Activated B cell treated with CpG ODN at 0.5 μM for 24 hours (primary cell): ENCODE measurements at regions of chr19 and their contacts with region 1.

Region 1: GRCh38 chr19:35213663-35214632 is 14.6 kb downstream of the FAM187B start:
- DNase-seq: peak; percentile 74
- ATAC-seq: peak; percentile 75
- H3K4me3 Mint-ChIP-seq: peak overlapping the region; percentile 65
- H3K27ac Mint-ChIP-seq: peak overlapping the region; percentile 98
- H3K4me1 Mint-ChIP-seq: peaks cover 79% of the 10 kb centered on the region
- H3K27me3 Mint-ChIP-seq: no peaks in the 10 kb centered on the region
- CTCF ChIP-seq: no peak

Region 2: DNA sequence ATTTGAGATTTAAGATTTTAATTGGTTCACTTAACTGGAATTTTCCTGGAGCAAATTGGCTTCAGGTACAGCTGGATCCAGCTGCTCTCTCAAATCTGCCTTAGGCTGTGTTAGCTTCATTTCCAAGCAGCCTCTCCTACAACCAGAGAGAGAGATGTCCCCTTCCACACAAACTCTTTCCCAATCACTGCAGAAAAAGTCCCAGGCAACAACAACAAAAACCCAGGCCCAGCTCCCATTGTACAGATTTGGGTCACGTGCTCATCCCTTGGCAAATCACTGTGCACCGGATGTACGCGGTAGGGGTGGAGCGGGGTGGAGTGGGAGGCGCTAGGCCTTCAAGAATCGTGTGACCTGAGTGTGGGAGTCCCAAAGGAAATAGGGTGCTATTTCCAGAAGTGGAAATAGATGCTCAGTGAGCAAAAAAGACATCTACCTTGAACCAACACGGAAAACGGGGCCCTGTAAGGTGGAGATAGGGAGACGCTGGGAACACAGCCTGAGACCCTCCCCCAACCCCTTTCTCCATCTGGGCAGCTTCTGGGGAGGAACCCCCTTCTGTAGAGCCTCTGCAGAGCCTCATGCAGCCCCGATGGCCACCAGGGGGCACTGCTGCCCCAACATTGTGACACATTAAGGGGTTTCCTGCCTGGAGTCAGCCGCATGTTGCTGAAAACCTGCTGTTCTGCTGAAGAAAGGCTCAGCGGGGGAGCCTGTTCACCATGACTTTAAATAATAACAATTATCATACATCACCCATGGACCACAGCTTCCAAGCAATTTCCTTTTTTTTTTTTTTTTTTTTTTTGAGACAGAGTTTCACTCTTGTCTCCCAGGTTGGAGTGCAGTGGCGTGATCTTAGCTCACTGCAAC is 147.0 kb before region 1 on chr19:
- CTCF ChIA-PET with region 1: interaction called, 4 read pairs
- POLR2A ChIA-PET with region 1: no interaction called
- intact Hi-C with region 1: loop called (anchors 1 kb)
- DNase-seq: peak; percentile 88
- ATAC-seq: peak; percentile 91
- H3K4me3 Mint-ChIP-seq: peak overlapping the region; percentile 24
- H3K27ac Mint-ChIP-seq: peak overlapping the region; percentile 41
- H3K4me1 Mint-ChIP-seq: peaks cover 30% of the 10 kb centered on the region
- H3K27me3 Mint-ChIP-seq: no peaks in the 10 kb centered on the region
- CTCF ChIP-seq: no peak

Region 3: DNA sequence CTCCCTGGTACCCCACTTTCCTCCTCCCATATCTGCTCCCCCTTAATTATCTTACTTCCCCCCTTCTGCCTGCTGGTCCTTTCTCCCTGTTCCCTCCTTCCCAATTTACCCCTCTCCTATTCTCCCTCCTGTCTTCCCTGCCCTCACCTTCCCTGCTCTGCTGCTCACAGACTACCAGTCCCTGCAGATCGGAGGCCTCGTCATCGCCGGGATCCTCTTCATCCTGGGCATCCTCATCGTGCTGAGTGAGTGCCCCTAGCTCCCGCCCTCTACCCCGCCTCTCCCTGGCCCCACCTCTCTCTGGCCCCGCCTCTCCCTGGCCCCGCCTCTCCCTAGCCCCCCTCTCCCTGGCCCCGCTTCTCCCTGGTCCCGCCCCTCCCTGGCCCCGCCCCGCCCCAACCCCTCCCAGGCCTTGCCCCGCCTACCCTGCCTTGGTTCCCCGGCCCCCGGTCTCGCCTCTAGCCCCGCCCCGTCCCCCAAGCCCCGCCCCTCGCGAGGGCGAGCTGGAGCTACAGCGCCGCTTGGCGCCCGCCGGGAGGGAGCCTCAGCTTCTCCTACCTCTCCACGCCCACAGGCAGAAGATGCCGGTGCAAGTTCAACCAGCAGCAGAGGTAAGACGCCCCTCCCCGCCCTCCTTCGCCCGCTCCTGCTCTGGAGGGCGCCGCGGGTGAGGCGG is 72.8 kb before region 1 on chr19:
- CTCF ChIA-PET with region 1: interaction called, 27 read pairs
- POLR2A ChIA-PET with region 1: interaction called, 18 read pairs
- intact Hi-C with region 1: loop called (anchors 1 kb)
- DNase-seq: peak; percentile 87
- ATAC-seq: peak; percentile 86
- H3K4me3 Mint-ChIP-seq: peak overlapping the region; percentile 87
- H3K27ac Mint-ChIP-seq: peak overlapping the region; percentile 77
- H3K4me1 Mint-ChIP-seq: peaks cover 40% of the 10 kb centered on the region
- H3K27me3 Mint-ChIP-seq: no peaks in the 10 kb centered on the region
- CTCF ChIP-seq: no peak

Region 4: GRCh38 chr19:35184884-35185283 is 29.1 kb before region 1 on chr19:
- CTCF ChIA-PET with region 1: no interaction called
- POLR2A ChIA-PET with region 1: interaction called, 13 read pairs
- intact Hi-C with region 1: no loop called
- DNase-seq: no peak
- ATAC-seq: no peak
- H3K4me3 Mint-ChIP-seq: no peak overlapping the region
- H3K27ac Mint-ChIP-seq: no peak overlapping the region
- H3K4me1 Mint-ChIP-seq: no peaks in the 10 kb centered on the region
- H3K27me3 Mint-ChIP-seq: no peaks in the 10 kb centered on the region
- CTCF ChIP-seq: no peak

Region 5: GRCh38 chr19:35247526-35248306 is 33.8 kb after region 1 on chr19:
- CTCF ChIA-PET with region 1: no interaction called
- POLR2A ChIA-PET with region 1: interaction called, 6 read pairs
- intact Hi-C with region 1: loop called (anchors 1 kb)
- DNase-seq: peak; percentile 59
- ATAC-seq: peak; percentile 52
- H3K4me3 Mint-ChIP-seq: peak overlapping the region; percentile 91
- H3K27ac Mint-ChIP-seq: peak overlapping the region; percentile 93
- H3K4me1 Mint-ChIP-seq: peaks cover 31% of the 10 kb centered on the region
- H3K27me3 Mint-ChIP-seq: peaks cover 2% of the 10 kb centered on the region
- CTCF ChIP-seq: no peak

Region 6: GRCh38 chr19:35318650-35319448 is 104.9 kb after region 1 on chr19:
- CTCF ChIA-PET with region 1: no interaction called
- POLR2A ChIA-PET with region 1: interaction called, 4 read pairs
- intact Hi-C with region 1: loop called (anchors 2 kb)
- DNase-seq: no peak
- ATAC-seq: peak; percentile 26
- H3K4me3 Mint-ChIP-seq: peak overlapping the region; percentile 71
- H3K27ac Mint-ChIP-seq: peak overlapping the region; percentile 96
- H3K4me1 Mint-ChIP-seq: peaks cover 89% of the 10 kb centered on the region
- H3K27me3 Mint-ChIP-seq: no peaks in the 10 kb centered on the region
- CTCF ChIP-seq: no peak

Region 7: GRCh38 chr19:35899547-35900214 is 685.7 kb after region 1 on chr19:
- CTCF ChIA-PET with region 1: no interaction called
- POLR2A ChIA-PET with region 1: no interaction called
- intact Hi-C with region 1: loop called (anchors 5 kb)
- DNase-seq: peak; percentile 93
- ATAC-seq: peak; percentile 57
- H3K4me3 Mint-ChIP-seq: peak overlapping the region; percentile 95
- H3K27ac Mint-ChIP-seq: peak overlapping the region; percentile 95
- H3K4me1 Mint-ChIP-seq: peaks cover 77% of the 10 kb centered on the region
- H3K27me3 Mint-ChIP-seq: no peaks in the 10 kb centered on the region
- CTCF ChIP-seq: no peak